PC-3 (cell line): ENCODE measurements at regions of chr16 and their contacts with region 1.

Region 1: GRCh38 chr16:27972500-27972899 is 91.0 kb downstream of the GSG1L start:
- DNase-seq: peak; percentile 56
- ATAC-seq: peak; percentile 67
- H3K4me3 ChIP-seq: no peak overlapping the region
- H3K27ac ChIP-seq: no peak overlapping the region
- H3K4me1 ChIP-seq: no peaks in the 10 kb centered on the region
- H3K27me3 ChIP-seq: no peaks in the 10 kb centered on the region
- CTCF ChIP-seq: peak; percentile 68

Region 2: GRCh38 chr16:27712251-27712711 is 260.2 kb before region 1 on chr16:
- CTCF ChIA-PET with region 1: no interaction called
- POLR2A ChIA-PET with region 1: no interaction called
- intact Hi-C with region 1: no loop called
- DNase-seq: no peak
- ATAC-seq: no peak
- H3K4me3 ChIP-seq: no peak overlapping the region
- H3K27ac ChIP-seq: no peak overlapping the region
- H3K4me1 ChIP-seq: no peaks in the 10 kb centered on the region
- H3K27me3 ChIP-seq: no peaks in the 10 kb centered on the region
- CTCF ChIP-seq: no peak

Region 3: DNA sequence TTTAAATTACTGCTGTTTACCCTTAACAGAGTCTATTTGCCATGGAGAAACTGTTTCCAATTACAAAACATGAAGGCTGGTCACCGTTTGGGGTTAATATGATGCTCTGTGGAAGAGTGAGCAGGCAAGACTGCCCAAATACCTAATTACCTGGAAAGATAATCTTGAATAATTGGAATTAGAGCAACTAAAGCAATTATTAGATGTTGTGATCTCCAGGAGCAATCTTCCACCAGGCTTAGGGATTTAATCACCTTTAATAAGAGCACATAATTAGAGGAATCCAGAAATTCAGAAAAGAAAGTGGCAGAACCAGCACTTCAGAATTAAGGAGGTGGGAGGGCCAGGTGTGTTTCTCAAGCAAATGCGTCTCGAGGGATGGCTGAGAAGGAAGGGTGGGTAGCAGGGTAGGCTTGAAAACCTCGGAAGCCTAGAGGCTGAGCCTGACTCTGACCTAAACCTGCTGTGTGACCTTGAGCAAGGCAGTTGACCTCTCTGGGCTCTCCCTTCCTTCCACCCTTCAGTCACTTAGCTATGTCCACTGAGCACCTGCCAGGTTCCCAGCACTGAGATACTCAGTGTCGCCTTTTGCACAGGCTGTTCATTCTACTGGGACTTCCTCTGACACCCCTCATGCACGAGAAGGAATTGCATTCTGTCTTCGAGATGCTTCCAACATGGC is 22.2 kb before region 1 on chr16:
- CTCF ChIA-PET with region 1: interaction called, 19 read pairs
- POLR2A ChIA-PET with region 1: no interaction called
- intact Hi-C with region 1: no loop called
- DNase-seq: no peak
- ATAC-seq: no peak
- H3K4me3 ChIP-seq: no peak overlapping the region
- H3K27ac ChIP-seq: no peak overlapping the region
- H3K4me1 ChIP-seq: no peaks in the 10 kb centered on the region
- H3K27me3 ChIP-seq: peaks cover 35% of the 10 kb centered on the region
- CTCF ChIP-seq: no peak

Region 4: DNA sequence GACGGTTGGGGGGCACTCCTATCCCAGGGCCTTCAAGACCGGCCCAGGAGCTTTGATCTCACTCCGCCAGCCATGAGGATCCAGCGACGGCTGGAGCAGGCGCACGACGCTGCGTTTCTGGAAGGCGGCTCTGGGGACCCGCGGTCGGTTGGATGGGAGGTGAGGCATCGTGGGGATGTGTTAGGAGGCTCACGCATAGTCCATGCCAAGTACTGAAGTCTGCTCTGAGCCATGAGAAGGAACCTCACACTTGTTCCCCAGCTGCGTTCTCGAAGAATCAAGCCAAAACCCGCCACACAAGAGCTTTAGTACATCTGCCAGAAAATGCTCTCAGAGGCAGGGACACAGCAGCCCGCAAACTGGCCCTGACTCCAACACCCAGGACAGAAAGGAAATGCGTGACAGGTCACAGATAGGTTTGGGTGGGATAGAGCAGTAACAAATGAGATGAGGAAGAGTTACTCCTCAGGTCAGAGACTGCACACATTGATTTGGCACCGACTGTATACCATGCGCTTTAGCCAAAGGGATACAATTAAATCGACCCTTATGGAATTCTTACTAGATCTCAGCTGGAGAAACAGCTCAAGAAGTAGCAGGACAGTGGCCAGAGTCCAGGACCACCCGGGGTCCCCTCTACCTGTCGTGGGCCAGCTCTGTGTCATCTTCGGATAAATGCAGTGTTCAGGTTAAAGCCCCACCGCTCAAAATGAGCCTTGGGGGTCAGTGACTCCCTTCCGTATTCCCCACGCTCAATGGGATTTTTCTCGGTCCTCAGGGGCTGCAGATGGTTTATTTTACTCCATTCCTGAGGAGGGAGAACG is 97.7 kb after region 1 on chr16:
- CTCF ChIA-PET with region 1: interaction called, 3 read pairs
- POLR2A ChIA-PET with region 1: no interaction called
- intact Hi-C with region 1: loop called (anchors 1 kb)
- DNase-seq: no peak
- ATAC-seq: no peak
- H3K4me3 ChIP-seq: no peak overlapping the region
- H3K27ac ChIP-seq: no peak overlapping the region
- H3K4me1 ChIP-seq: no peaks in the 10 kb centered on the region
- H3K27me3 ChIP-seq: 0 out of 2 replicates have a peak, but pooled peaks cover 8% of the 10 kb centered on the region
- CTCF ChIP-seq: no peak